ENCODE measurements at regions of chr1 and their contacts with region 1.

Region 1: GRCh38 chr1:89454845-89455521 is 69.6 kb upstream of the LRRC8B start:
- DNase-seq: peak; percentile 85
- H3K4me3 Mint-ChIP-seq: no peak overlapping the region
- H3K27ac Mint-ChIP-seq: no peak overlapping the region
- H3K4me1 Mint-ChIP-seq: peaks cover 18% of the 10 kb centered on the region
- H3K27me3 Mint-ChIP-seq: peaks cover 4% of the 10 kb centered on the region

Region 2: GRCh38 chr1:88935522-88936222 is 519.3 kb before region 1 on chr1:
- CTCF ChIA-PET with region 1: no interaction called
- intact Hi-C with region 1: loop called (anchors 1 kb)
- DNase-seq: peak; percentile 9
- H3K4me3 Mint-ChIP-seq: no peak overlapping the region
- H3K27ac Mint-ChIP-seq: no peak overlapping the region
- H3K4me1 Mint-ChIP-seq: no peaks in the 10 kb centered on the region
- H3K27me3 Mint-ChIP-seq: no peaks in the 10 kb centered on the region

Region 3: DNA sequence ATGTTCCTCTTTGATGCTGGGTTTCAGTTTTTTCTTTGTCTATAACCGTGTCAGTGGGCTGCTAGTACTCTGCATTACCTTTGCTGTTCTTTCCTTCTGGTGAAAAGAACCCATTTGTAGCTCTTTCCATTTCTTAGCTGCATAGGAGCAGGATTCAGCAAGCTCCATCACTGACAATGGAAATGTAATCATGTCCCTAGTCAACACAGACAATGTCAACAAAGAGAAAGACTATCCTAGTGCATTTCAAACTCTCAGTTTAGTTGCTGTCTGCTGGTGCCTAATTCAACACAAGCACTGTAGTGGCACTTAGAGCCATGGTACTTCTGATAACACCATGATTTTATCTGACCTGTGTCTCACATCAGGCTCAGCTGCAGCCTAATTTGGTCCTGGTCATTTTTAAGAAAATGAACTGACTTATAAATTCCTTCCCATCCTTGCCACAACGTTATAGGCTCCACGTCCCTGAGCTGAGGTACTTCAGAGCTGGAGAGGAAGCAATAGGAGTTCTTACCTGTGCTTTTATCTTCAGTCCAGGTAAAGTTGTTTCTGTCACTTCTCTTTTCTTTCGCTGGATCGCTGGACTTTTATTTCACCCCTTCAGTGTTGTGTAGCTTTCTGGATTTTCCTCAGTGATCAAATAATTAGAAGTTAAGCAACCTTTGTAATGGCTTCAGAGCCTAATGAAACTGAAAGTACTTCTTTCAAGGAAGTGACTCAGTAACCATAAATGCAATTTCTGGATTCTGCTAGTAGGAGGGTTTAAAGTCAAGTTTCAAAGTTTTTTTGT is 432.6 kb before region 1 on chr1 and contains the start of gene GBP3:
- CTCF ChIA-PET with region 1: interaction called, 7 read pairs
- intact Hi-C with region 1: loop called (anchors 1 kb)
- DNase-seq: no peak
- H3K4me3 Mint-ChIP-seq: peak within 1 kb of the TSS; percentile 73
- H3K27ac Mint-ChIP-seq: peak within 1 kb of the TSS; percentile 72
- H3K4me1 Mint-ChIP-seq: peaks cover 51% of the 10 kb centered on the region
- H3K27me3 Mint-ChIP-seq: no peaks in the 10 kb centered on the region
- total RNA-seq, gene GBP3: 1.4 to 1.8 TPM

Region 4: GRCh38 chr1:89125913-89126580 is 328.9 kb before region 1 on chr1 and contains the start of gene GBP2:
- CTCF ChIA-PET with region 1: no interaction called
- intact Hi-C with region 1: loop called (anchors 1 kb)
- DNase-seq: peak; percentile 44
- H3K4me3 Mint-ChIP-seq: peak within 1 kb of the TSS; percentile 91
- H3K27ac Mint-ChIP-seq: peak within 1 kb of the TSS; percentile 96
- H3K4me1 Mint-ChIP-seq: peaks cover 44% of the 10 kb centered on the region
- H3K27me3 Mint-ChIP-seq: no peaks in the 10 kb centered on the region
- total RNA-seq, gene GBP2: 338 to 351 TPM

Region 5: DNA sequence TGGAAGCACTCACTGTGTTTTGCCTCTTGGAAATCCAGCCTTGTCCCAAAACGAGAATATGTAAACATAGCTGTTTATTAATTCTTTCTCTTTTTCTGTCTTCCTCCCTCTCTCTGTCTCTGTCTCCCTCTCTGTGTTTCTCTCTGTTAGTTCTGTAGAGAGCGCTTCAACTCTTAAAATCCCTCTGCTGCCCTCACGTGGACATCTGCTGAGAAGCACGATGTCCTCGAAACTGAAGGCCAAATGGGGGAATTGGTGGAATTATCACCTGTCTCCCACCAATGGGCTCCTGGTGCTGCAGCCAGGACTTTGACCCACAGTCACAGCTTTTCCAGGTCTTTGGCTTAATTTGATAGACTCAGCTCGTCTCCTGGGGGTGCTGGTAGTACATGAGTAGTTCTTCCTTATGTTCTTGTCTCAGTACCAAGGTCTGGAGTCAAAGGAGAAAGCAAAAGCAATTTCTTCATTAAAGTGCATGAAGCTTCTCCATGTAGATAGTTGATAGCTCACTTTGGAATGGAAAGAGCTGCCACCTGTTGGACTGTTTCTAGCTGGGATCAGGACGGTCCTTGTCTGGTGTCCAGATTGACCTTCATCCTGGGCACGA is 96.6 kb before region 1 on chr1:
- CTCF ChIA-PET with region 1: interaction called, 9 read pairs
- intact Hi-C with region 1: loop called (anchors 1 kb)
- DNase-seq: peak; percentile 91
- H3K4me3 Mint-ChIP-seq: peak overlapping the region; percentile 33
- H3K27ac Mint-ChIP-seq: peak overlapping the region; percentile 65
- H3K4me1 Mint-ChIP-seq: peaks cover 33% of the 10 kb centered on the region
- H3K27me3 Mint-ChIP-seq: no peaks in the 10 kb centered on the region

Region 6: DNA sequence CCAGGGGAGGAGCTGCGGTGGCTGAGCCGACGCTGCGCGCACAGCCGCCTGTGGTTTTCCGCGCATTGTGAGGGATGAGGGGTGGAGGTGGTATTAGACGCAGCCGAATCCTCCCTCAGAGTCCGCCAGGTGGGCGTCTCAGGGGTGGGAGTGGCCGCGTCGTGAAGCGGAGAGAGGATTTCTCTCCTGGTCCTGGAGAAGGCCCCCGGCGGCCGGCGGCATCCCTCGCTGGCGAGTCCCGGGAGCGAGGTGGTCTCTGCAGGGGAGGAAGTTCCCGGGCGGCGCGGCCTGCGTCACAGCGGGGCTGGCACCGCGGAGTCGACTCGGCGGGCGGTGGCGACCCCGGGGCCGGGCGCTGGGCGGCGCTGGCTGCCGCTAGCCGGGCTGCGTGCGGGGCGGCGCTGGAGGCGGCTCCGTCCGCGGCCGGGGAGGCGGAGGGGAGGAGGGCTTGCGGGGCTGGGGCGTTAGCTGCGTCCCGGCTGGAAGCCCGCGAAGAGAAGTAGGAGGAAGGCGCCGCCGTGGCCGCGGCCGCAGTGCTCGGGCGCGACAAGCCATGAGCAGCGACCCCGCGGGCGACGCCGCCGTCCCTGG is 177.8 kb after region 1 on chr1 and contains the start of gene LRRC8C:
- CTCF ChIA-PET with region 1: no interaction called
- intact Hi-C with region 1: no loop called
- DNase-seq: peak; percentile 86
- H3K4me3 Mint-ChIP-seq: peak within 1 kb of the TSS; percentile 91
- H3K27ac Mint-ChIP-seq: peak within 1 kb of the TSS; percentile 93
- H3K4me1 Mint-ChIP-seq: peaks cover 65% of the 10 kb centered on the region
- H3K27me3 Mint-ChIP-seq: no peaks in the 10 kb centered on the region
- total RNA-seq, gene LRRC8C: 13.6 TPM